ENCODE measurements at regions of chr13 and their contacts with region 1.

Region 1: DNA sequence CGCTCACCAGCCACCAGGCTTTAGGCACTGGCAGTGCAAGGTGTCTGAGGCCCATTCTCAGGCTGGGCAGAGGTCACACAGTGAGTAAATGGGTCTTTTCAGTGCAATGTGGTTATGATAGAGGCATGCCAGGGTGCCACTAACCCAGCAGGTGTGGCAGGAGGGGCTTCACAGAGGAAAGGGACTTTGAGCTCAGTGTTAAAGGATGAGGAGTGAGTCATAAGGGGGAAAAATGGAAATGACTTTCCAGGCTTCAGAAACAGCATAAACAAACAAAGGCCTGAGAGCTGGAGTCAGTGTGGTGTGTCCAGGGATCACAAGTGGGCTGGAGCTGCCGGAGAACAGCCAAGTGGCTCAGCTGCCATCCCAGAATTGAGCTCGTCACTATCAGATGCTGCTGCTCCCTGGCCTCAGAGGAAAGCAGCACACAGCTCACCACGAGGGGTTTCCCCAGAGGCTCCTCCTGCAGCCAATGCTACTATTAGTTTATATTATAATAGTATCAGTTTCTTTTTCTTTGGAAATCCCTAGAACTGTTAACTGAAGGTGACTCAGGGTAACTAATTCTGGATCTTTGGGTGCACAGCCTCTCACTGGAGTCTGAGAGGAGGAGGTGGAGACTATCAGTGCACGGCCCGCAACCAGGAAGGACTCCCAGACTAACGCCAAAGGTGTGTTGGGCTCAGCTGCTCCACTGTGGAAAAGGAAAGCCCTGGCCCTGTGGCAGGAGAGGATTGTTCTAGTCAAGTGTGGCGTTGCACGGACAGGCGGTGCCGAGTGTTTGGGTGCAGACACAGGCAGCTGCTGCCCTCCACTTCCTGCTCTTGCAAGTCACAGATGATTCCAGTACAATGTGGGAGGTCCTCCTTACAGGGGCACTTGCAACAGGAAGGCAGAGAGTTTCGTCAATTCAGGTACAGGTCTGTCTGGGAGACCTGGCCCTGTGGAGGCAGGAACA is 39.5 kb downstream of the DHRS12 start:
- DNase-seq: peak; percentile 36
- ATAC-seq: peak; percentile 91
- H3K4me3 Mint-ChIP-seq: peak overlapping the region; percentile 74
- H3K27ac Mint-ChIP-seq: peak overlapping the region; percentile 90
- H3K4me1 Mint-ChIP-seq: peaks cover 29% of the 10 kb centered on the region
- H3K27me3 Mint-ChIP-seq: no peaks in the 10 kb centered on the region
- CTCF ChIP-seq: no peak

Region 2: DNA sequence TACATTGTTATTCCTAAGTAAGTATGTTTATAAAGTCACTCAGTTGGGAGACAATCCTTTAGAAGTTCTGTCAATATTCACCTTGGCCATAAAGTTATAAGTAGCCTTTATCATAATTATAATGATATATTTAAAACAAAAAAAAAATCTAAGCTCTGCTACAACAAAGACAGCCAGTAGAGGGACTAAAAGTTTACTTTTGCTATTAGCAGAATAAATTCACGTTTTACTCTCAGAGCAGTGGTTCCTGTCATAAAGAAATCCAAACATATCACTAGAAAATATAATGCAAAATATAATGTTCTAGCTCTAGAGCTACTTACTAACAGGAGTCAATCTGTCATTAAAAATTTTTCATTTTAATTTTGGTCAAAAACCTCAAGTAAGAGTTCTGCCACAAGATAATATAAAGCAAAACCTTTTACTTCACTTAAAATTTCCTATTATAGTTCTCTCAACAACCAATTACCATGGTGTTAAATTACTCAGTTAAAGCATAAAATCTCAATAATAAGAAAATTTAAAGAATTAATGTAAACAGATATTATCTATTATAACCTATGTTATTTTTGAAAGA is 329.4 kb before region 1 on chr13:
- CTCF ChIA-PET with region 1: no interaction called
- POLR2A ChIA-PET with region 1: interaction called, 3 read pairs
- intact Hi-C with region 1: loop called (anchors 1 kb)
- DNase-seq: no peak
- ATAC-seq: peak; percentile 50
- H3K4me3 Mint-ChIP-seq: no peak overlapping the region
- H3K27ac Mint-ChIP-seq: no peak overlapping the region
- H3K4me1 Mint-ChIP-seq: peaks cover 3% of the 10 kb centered on the region
- H3K27me3 Mint-ChIP-seq: no peaks in the 10 kb centered on the region
- CTCF ChIP-seq: peak; percentile 46

Region 3: DNA sequence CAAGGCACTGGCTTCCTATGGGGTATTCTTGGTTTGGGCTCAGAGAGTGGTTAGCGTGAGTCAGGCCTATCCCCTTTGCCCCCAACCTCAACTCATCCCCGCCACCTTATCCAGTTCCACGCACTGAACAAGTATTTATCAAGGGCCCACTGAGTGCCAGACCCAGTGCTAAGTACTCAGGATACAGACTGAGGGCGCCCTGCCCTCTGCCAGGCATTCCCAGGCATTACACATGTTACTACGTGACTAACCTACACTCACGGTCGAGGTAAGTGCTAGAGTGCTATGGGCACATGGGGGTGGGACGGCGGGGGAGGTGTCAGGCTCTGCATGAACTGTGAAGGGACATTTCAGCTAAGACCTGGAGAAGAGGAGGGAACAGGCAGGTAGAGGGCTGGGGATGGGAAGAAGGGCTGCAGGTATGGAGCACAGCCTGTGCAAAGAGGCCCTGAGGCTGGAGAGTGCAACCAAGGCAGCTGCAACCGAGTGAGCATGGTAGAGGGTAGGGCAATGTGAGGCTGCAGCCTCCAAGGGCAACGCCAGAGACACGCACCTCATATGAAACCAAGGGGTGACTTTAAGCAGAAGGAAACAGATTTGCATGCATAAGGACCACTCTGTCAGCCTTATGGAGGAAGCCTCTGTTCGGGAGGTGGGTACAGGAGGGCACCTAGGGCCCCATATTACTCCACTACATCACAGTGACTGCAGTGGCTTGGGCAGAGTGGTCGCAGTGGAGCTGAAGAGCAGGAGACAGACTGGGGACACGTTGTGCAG is 17.0 kb after region 1 on chr13:
- CTCF ChIA-PET with region 1: no interaction called
- POLR2A ChIA-PET with region 1: interaction called, 3 read pairs
- intact Hi-C with region 1: loop called (anchors 2 kb)
- DNase-seq: no peak
- ATAC-seq: peak; percentile 60
- H3K4me3 Mint-ChIP-seq: no peak overlapping the region
- H3K27ac Mint-ChIP-seq: no peak overlapping the region
- H3K4me1 Mint-ChIP-seq: peaks cover 16% of the 10 kb centered on the region
- H3K27me3 Mint-ChIP-seq: no peaks in the 10 kb centered on the region
- CTCF ChIP-seq: no peak

Region 4: DNA sequence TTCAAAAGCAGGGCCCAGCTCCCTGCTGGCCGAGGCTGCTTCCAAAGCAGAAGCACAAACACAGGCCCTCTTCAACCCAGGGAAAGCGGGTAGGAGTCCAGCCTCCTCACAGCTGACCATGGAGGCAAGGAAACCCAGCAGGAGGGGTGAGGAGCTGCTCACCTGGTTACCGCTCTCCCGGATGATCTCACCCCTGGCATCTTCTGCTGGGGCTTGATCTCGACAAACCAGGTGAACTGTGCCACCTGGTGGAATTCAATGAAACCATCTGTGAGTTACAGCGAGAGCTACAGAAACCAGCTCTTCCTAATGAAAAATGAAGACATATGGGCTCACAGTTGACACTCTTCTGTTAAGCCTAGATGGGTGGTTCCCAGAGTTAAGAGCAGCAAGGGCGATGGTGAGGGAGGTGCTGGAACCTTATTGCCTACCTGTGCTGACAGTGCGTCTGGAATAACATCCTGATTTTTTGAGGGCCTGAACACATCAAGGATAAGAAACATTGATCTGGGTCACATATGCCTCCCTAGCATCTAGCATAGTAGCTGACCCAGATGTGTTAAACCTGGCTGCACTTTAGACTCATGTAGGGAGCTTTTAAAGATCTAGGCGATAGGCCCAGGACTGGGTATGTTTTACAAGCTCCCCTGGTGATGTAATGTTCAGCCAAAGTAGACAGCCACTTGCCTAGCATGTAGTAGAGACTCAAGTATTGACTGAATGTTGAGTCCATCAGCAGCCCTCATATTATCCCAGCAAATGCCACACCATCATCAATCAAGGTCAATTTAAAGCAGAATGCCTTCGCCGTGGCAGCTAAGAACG is 33.4 kb after region 1 on chr13:
- CTCF ChIA-PET with region 1: interaction called, 5 read pairs
- POLR2A ChIA-PET with region 1: interaction called, 7 read pairs
- intact Hi-C with region 1: loop called (anchors 2 kb)
- DNase-seq: no peak
- ATAC-seq: peak; percentile 45
- H3K4me3 Mint-ChIP-seq: no peak overlapping the region
- H3K27ac Mint-ChIP-seq: no peak overlapping the region
- H3K4me1 Mint-ChIP-seq: peaks cover 47% of the 10 kb centered on the region
- H3K27me3 Mint-ChIP-seq: no peaks in the 10 kb centered on the region
- CTCF ChIP-seq: no peak

Region 5: GRCh38 chr13:51803422-51804294 is 39.2 kb after region 1 on chr13 and contains the start of gene DHRS12:
- CTCF ChIA-PET with region 1: interaction called, 4 read pairs
- POLR2A ChIA-PET with region 1: interaction called, 7 read pairs
- intact Hi-C with region 1: loop called (anchors 1 kb)
- DNase-seq: peak; percentile 84
- ATAC-seq: peak; percentile 81
- H3K4me3 Mint-ChIP-seq: peak within 1 kb of the TSS; percentile 92
- H3K27ac Mint-ChIP-seq: peak within 1 kb of the TSS; percentile 99
- H3K4me1 Mint-ChIP-seq: peaks cover 47% of the 10 kb centered on the region
- H3K27me3 Mint-ChIP-seq: no peaks in the 10 kb centered on the region
- CTCF ChIP-seq: no peak
- total RNA-seq, gene DHRS12: 11.6 and 14.1 TPM in 2 replicates

Region 6: DNA sequence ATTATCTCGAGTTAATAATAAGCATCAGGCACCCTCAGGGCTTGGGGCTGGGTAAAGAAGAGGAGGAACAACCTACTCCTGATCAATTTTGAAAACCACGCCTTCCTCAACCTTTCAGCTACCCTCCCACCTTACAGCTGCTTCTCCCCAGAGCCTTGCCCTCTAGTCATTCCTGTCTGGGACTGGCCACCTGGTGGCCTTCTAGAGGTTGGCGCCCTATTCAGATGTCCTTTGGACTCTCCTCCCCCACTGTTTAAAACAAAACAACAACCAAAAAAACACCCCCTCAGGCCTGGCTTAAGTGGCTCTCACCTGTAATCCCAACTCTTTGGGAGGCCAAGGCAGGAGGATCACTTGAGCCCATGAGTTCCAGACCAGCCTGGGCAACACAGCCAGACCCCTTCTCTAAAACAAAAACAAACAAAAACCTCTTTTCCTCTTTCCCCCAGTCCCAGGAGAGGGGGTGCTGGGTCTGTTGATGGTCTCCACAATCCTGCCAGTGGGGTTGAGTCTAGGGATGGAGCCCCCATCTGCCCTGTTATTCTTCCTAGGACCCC is 159.6 kb after region 1 on chr13:
- CTCF ChIA-PET with region 1: no interaction called
- POLR2A ChIA-PET with region 1: no interaction called
- intact Hi-C with region 1: no loop called
- DNase-seq: no peak
- ATAC-seq: peak; percentile 34
- H3K4me3 Mint-ChIP-seq: no peak overlapping the region
- H3K27ac Mint-ChIP-seq: no peak overlapping the region
- H3K4me1 Mint-ChIP-seq: peaks cover 4% of the 10 kb centered on the region
- H3K27me3 Mint-ChIP-seq: peaks cover 8% of the 10 kb centered on the region
- CTCF ChIP-seq: no peak